ENCODE measurements at regions of chr11 and their contacts with region 1.

Region 1: GRCh38 chr11:2151500-2152257 is 9.3 kb downstream of the INS start:
- DNase-seq: peak; percentile 85 to 90
- ATAC-seq: peak; percentile 33 to 53; a peak in 5 of 6 replicates
- H3K4me3 ChIP-seq: no peak overlapping the region
- H3K27ac ChIP-seq: peak overlapping the region; percentile 9 to 63; a peak in 4 of 6 replicates
- H3K4me1 ChIP-seq: no peaks in the 10 kb centered on the region
- CTCF ChIP-seq: peak; percentile 64
- EP300 ChIP-seq: no peak
- POLR2A ChIP-seq: no peak
- RAD21 ChIP-seq: peak; percentile 78 to 89

Region 2: DNA sequence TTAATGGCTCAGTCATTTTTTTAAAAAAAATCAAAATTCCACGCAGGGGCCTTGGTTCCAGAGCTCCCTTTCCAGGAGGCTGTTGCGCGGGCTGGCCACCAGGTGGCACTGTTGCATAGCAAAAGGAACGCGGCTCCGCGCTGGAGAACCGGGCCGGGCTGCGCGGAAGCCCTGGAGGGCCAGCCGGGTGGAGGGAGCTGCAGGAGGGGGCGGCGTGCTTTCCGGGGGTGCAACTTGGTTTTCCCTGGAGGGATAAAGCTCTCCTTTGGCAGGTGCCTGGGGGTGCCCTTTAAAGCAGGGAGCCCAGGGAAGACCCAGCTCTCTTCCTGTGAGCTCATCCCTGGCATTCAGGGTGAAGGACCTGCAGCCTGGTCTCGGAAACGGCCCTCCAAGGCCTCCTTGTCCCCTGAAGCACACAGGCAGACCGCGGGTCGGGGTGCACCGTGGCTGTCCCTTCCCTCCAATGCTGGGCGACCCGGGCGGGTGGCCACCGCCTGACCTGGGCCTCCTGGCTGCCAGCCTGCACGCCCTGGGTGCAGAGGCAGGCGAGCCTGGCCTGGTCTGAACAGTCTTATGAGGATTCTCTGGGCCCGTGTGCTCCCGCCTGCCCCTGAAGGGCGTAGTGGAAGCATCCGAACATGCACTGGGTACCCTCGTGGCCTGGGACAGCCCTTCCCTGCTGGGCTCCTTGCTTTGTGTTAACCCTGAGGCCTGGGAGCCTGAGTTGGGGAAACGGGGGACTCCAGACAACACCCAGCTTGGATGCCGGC is 498.7 kb before region 1 on chr11:
- CTCF ChIA-PET with region 1: interaction called, 350 read pairs
- POLR2A ChIA-PET with region 1: no interaction called
- DNase-seq: peak; percentile 51 to 89
- ATAC-seq: peak; percentile 79 to 93
- H3K4me3 ChIP-seq: no peak overlapping the region
- H3K27ac ChIP-seq: peak overlapping the region in 1 of 2 experiments; percentile 26; a peak in 2 of 6 replicates
- H3K4me1 ChIP-seq: no peaks in the 10 kb centered on the region; the same call in 2 of the 3 replicates
- CTCF ChIP-seq: peak; percentile 93
- EP300 ChIP-seq: no peak
- POLR2A ChIP-seq: no peak
- RAD21 ChIP-seq: peak; percentile 94 to 97

Region 3: DNA sequence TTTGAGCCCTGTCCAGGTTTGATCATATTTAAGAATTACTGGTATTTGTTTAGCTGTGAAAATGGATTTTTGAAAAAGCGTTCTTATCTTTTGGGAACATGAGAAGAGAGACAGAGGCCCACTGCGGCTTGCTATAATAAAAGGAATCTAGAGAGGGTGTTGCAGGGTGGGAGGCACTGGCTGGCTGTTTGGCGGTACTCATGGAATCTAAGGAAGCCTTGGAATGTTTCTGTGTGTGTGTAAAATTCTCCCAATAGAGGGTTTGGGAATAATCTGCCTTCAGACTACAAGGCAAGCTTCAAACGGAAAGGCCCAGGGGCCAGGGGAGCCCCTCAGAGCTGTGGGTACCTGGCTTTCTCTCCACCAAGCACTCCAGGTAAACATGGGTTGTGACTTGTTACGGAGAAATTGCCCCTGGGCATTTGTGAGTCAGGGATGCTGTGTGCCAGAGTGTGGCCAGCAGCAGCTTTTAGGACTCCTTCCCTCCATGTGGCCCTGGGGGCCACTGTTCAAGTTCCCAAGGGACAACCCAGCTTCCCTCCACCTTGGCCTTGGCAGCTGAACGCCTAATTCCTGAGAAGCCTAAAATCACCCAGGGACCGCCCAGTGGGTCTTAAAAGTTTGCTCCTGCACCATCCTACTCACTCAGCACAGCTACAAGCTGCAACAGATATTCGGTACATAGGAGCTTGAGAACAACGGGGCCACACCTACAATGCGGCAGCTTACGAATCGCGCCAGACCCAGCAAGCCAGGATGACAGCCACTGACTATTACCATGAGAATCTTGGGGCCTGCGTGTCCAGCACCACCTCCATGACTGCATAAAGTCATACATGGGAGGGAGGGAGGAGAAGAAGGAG is 331.0 kb before region 1 on chr11:
- CTCF ChIA-PET with region 1: interaction called, 18 read pairs
- POLR2A ChIA-PET with region 1: no interaction called
- DNase-seq: no peak
- ATAC-seq: no peak
- H3K4me3 ChIP-seq: no peak overlapping the region
- H3K27ac ChIP-seq: no peak overlapping the region
- H3K4me1 ChIP-seq: peaks cover 5% of the 10 kb centered on the region
- CTCF ChIP-seq: no peak
- EP300 ChIP-seq: no peak
- POLR2A ChIP-seq: no peak
- RAD21 ChIP-seq: no peak

Region 4: GRCh38 chr11:1870721-1871466 is 280.8 kb before region 1 on chr11:
- CTCF ChIA-PET with region 1: interaction called, 334 read pairs
- POLR2A ChIA-PET with region 1: no interaction called
- DNase-seq: no peak
- ATAC-seq: peak in 1 of 2 experiments; percentile 34; a peak in 3 of 6 replicates
- H3K4me3 ChIP-seq: no peak overlapping the region
- H3K27ac ChIP-seq: peak overlapping the region in 1 of 2 experiments; percentile 56; a peak in 3 of 6 replicates
- H3K4me1 ChIP-seq: peaks cover 25% of the 10 kb centered on the region
- CTCF ChIP-seq: no peak
- EP300 ChIP-seq: no peak
- POLR2A ChIP-seq: no peak
- RAD21 ChIP-seq: no peak

Region 5: GRCh38 chr11:1970956-1971355 is 180.7 kb before region 1 on chr11:
- CTCF ChIA-PET with region 1: interaction called, 554 read pairs
- POLR2A ChIA-PET with region 1: no interaction called
- DNase-seq: peak in 1 of 2 experiments; percentile 0
- ATAC-seq: no peak
- H3K4me3 ChIP-seq: no peak overlapping the region
- H3K27ac ChIP-seq: no peak overlapping the region
- H3K4me1 ChIP-seq: no peaks in the 10 kb centered on the region
- CTCF ChIP-seq: no peak
- EP300 ChIP-seq: no peak
- POLR2A ChIP-seq: no peak
- RAD21 ChIP-seq: no peak

Region 6: DNA sequence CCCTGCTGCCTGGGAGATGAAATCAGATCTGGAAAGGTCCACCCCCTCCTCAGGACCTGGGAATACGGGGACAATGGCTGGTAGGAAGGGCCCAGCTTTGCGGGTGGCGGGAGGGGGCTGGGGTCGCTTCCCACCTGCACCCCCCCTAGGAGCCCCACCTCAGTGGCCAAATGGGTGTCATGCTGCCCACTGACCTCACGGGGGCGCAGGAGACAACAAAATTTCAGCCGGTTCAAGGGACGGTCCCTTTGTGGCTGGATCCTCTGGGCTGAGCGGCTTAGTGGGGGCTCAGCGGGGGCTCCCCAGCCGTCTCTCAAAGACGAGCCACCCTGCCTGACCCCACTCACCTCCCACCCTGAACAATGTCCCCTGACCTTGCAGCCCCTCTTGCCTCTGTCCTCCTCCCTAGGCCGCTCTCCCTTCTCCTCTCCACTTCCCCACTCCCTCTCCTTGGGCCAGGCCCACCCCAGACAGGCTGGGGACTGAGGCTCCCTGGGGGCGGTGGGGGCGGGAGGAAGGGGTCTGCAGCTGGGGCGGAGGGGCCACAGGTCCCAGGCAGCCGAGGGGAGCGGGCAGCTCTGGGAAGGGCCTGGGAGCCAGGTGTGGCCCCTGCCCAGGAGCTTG is 114.7 kb before region 1 on chr11:
- CTCF ChIA-PET with region 1: interaction called, 1,333 read pairs
- POLR2A ChIA-PET with region 1: no interaction called
- DNase-seq: no peak
- ATAC-seq: peak; percentile 44 to 85; a peak in 3 of 6 replicates
- H3K4me3 ChIP-seq: no peak overlapping the region
- H3K27ac ChIP-seq: no peak overlapping the region
- H3K4me1 ChIP-seq: no peaks in the 10 kb centered on the region
- CTCF ChIP-seq: no peak
- EP300 ChIP-seq: no peak
- POLR2A ChIP-seq: no peak
- RAD21 ChIP-seq: no peak

Region 7: GRCh38 chr11:2122222-2123085 is 29.2 kb before region 1 on chr11:
- CTCF ChIA-PET with region 1: interaction called, 22 read pairs
- POLR2A ChIA-PET with region 1: no interaction called
- DNase-seq: no peak
- ATAC-seq: no peak; a peak in 1 of 6 replicates
- H3K4me3 ChIP-seq: no peak overlapping the region
- H3K27ac ChIP-seq: no peak overlapping the region
- H3K4me1 ChIP-seq: no peaks in the 10 kb centered on the region
- CTCF ChIP-seq: no peak
- EP300 ChIP-seq: no peak
- POLR2A ChIP-seq: no peak
- RAD21 ChIP-seq: no peak

Region 8: DNA sequence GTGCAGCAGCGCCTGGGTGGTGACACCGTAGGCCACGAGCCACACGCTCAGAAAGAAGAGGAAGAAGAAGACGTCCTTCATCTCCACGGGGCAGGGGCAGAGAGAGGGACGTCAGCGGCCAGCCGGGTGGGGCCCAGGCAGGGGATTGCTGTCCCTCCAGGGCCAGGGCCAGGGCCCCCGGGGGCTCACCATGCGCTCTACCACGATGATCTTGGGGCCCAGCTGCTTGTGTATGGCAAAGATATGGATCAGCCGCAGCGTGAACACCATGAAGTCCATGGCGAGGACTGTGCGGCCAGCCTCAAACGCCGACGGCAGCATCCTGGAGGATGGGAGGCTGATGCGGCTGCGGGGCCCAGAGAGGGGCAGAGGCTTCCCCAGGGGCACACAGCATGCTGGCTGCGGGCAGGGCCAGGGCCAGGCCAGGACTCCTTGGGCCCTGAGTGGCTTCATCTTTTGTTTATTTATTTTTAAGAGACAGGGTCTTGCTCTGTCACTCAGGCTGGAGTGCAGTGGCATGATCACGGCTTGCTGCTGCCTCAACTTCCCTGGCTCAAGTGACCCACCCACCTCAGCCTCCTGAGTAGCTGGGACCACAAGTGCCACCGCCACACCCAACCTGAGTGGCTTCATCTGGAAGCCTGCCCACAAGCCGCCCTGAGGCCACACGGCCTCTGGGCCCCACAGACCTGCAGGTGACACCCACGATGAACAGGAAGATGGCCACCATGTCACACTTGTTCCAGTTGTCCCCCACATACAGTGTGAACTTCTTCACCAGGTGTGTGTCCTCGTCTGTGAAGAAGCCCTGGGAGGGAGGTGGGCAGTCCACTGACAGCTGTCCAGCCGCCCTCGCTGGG is 260.0 kb after region 1 on chr11:
- CTCF ChIA-PET with region 1: no interaction called
- POLR2A ChIA-PET with region 1: no interaction called
- DNase-seq: no peak
- ATAC-seq: no peak
- H3K4me3 ChIP-seq: no peak overlapping the region
- H3K27ac ChIP-seq: no peak overlapping the region
- H3K4me1 ChIP-seq: no peaks in the 10 kb centered on the region
- CTCF ChIP-seq: no peak
- EP300 ChIP-seq: no peak
- POLR2A ChIP-seq: no peak
- RAD21 ChIP-seq: no peak